Sigmoid colon (tissue), 7 donors: ENCODE measurements at regions of chr6 and their contacts with region 1.

Region 1: DNA sequence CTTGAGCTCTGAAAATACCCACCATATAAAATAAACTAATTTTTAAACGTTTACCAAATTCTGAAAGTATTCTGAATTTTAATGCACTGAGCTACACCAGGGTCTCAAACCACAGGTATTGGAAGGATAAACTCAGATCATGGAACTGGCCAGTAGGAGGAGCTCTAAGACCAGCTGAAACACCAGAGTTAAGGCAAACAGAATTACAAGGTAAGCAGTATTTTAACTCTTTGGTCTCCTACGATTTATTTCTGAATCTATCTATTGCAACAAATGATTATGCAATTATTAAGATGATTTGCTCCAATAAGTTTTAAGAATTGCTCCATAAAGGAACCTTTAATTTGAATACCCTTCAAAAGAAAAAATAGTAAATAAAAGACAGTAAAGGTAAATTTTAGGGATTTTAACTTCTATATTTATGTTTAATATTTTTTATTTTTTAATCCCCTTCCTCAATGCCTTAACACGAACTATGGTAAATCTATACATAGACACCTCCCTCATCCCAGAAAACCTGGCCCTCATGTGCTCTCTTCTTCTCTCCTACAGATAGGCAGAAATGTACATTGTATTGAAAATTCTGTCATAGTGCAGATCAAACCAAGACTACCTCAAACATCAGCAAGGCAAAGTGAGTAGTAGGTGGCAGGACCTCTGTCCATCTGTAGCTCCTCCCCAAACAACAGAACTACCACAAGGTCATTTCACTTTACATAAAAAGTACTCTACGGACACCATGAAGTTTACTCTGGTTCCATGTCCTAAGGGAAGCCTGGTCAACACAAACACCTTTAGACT is 58.4 kb downstream of the SMLR1 start:
- DNase-seq: peak; percentile 78
- H3K4me3 ChIP-seq: no peak overlapping the region
- H3K27ac ChIP-seq: no peak overlapping the region
- H3K4me1 ChIP-seq: peaks cover 0 to 4% (median under 1%) of the 10 kb centered on the region in 4 donors
- H3K27me3 ChIP-seq: no peaks in the 10 kb centered on the region
- CTCF ChIP-seq: peak; percentile 80 to 87 (median 85)
- EP300 ChIP-seq: no peak
- POLR2A ChIP-seq: no peak

Region 2: GRCh38 chr6:130466052-130467048 is 419.2 kb before region 1 on chr6:
- intact Hi-C with region 1: no loop called
- DNase-seq: no peak
- H3K4me3 ChIP-seq: no peak overlapping the region
- H3K27ac ChIP-seq: no peak overlapping the region
- H3K4me1 ChIP-seq: no peaks in the 10 kb centered on the region
- H3K27me3 ChIP-seq: no peaks in the 10 kb centered on the region
- CTCF ChIP-seq: no peak
- EP300 ChIP-seq: no peak
- POLR2A ChIP-seq: no peak

Region 3: DNA sequence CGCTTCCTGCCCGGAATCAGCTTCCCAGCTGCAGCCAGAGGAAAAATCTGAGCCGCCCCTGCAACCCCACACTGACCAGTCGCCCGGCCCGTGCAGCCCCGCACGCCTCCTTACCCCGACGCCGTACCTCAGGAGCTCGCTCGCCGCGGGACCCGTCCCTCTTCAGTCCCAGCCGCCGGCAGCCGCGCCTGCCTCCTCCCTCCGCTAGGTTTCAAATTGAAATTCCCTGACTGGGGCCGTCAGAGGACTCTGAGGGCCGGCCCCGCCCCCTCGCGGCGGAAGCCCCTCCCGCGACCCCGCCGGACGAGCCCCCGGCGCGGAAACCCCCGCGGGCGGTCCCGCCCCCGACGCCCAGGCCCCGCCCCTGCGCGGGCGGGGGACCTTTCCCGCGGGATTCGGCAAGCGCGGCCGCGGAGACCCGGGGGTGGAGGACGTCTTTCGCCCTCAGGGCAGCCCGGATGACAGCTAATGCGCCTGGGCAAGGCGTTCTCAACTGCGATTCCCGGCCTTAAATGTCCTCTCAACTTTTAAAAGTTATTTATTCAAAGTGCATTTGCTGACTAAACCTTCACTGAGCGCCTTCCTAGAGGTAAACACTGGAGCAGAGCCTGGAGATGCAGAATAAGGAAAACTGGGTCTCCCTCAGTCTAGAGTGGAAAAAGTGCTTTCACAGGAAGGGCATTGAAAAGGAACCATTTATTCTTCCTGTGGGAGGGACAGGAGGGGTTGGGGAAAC is 177.6 kb after region 1 on chr6 and contains the start of gene EPB41L2:
- intact Hi-C with region 1: loop called (anchors 2 kb)
- DNase-seq: peak; percentile 94
- H3K4me3 ChIP-seq: peak within 1 kb of the TSS; percentile 82 to 97 (median 93)
- H3K27ac ChIP-seq: peak within 1 kb of the TSS; percentile 81 to 93 (median 90)
- H3K4me1 ChIP-seq: peaks cover 0 to 11% (median 7%) of the 10 kb centered on the region in 4 donors
- H3K27me3 ChIP-seq: no peaks in the 10 kb centered on the region
- CTCF ChIP-seq: peak; percentile 11 to 54 (median 34)
- EP300 ChIP-seq: no peak
- POLR2A ChIP-seq: peak; percentile 54 to 67
- total RNA-seq, gene EPB41L2: 65.7 to 147 (median 114) TPM

Region 4: GRCh38 chr6:131116749-131117360 is 231.3 kb after region 1 on chr6:
- intact Hi-C with region 1: loop called (anchors 1 kb)
- DNase-seq: no peak
- H3K4me3 ChIP-seq: no peak overlapping the region
- H3K27ac ChIP-seq: no peak overlapping the region
- H3K4me1 ChIP-seq: peaks cover 0 to 3% (median 0%) of the 10 kb centered on the region in 4 donors
- H3K27me3 ChIP-seq: no peaks in the 10 kb centered on the region
- CTCF ChIP-seq: peak; percentile 36 to 46 (median 42)
- EP300 ChIP-seq: no peak
- POLR2A ChIP-seq: no peak

Region 5: GRCh38 chr6:131163886-131164285 is 278.3 kb after region 1 on chr6:
- intact Hi-C with region 1: loop called (anchors 2 kb)
- DNase-seq: no peak
- H3K4me3 ChIP-seq: no peak overlapping the region
- H3K27ac ChIP-seq: peak overlapping the region in 3 of 4 donors; percentile 2 to 15 (median 15)
- H3K4me1 ChIP-seq: no peaks in the 10 kb centered on the region
- H3K27me3 ChIP-seq: no peaks in the 10 kb centered on the region
- CTCF ChIP-seq: no peak
- EP300 ChIP-seq: no peak
- POLR2A ChIP-seq: no peak